Naive thymus-derived CD4-positive, alpha-beta T cell (primary cell): ENCODE measurements at regions of chr11 and their contacts with region 1.

Region 1: GRCh38 chr11:108788565-108789199 is 123.8 kb downstream of the DDX10 start:
- DNase-seq: peak in 1 of 9 donors; percentile 2
- ATAC-seq: no peak
- H3K4me3 ChIP-seq: no peak overlapping the region
- H3K4me3 Mint-ChIP-seq: no peak overlapping the region
- H3K27ac ChIP-seq: no peak overlapping the region
- H3K27ac Mint-ChIP-seq: no peak overlapping the region
- H3K4me1 ChIP-seq: no peaks in the 10 kb centered on the region
- H3K4me1 Mint-ChIP-seq: peaks cover 20 to 62% (median 50%) of the 10 kb centered on the region in 7 donors
- H3K27me3 ChIP-seq: no peaks in the 10 kb centered on the region
- H3K27me3 Mint-ChIP-seq: no peaks in the 10 kb centered on the region

Region 2: GRCh38 chr11:108871152-108871551 is 82.5 kb after region 1 on chr11:
- CTCF ChIA-PET with region 1: no interaction called
- POLR2A ChIA-PET with region 1: no interaction called
- intact Hi-C with region 1: loop called in 1 of 2 experiments (anchors 2 kb)
- DNase-seq: peak in 3 of 9 donors; percentile 10 to 22 (median 14)
- ATAC-seq: no peak
- H3K4me3 ChIP-seq: no peak overlapping the region
- H3K4me3 Mint-ChIP-seq: no peak overlapping the region
- H3K27ac ChIP-seq: no peak overlapping the region
- H3K27ac Mint-ChIP-seq: no peak overlapping the region
- H3K4me1 ChIP-seq: no peaks in the 10 kb centered on the region
- H3K4me1 Mint-ChIP-seq: peaks cover 0 to 21% (median 7%) of the 10 kb centered on the region in 7 donors
- H3K27me3 ChIP-seq: no peaks in the 10 kb centered on the region
- H3K27me3 Mint-ChIP-seq: no peaks in the 10 kb centered on the region